GM12878 (cell line): ENCODE measurements at regions of chr3 and their contacts with region 1.

Region 1: DNA sequence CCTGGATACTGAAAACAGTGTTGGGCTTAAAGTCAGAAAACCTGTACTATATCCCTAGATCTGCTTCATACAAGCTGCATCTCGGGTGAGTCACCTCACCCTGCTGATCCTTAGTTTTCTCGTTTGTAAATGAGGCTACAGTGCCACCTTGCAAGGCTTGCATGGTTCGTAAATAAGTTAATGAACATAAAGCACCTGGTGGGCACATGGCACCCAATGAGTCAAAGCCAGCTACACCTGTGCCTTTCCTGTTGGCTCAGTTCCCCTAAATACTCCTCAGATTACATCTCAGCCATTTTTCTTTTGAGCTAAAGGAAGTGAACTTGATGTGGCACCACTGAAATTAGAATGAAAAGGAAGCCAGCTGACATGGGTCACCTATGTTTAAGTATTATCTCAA is 26.5 kb downstream of the RTP1 start:
- DNase-seq: no peak
- ATAC-seq: no peak
- H3K4me3 ChIP-seq: no peak overlapping the region
- H3K27ac ChIP-seq: no peak overlapping the region
- H3K4me1 ChIP-seq: no peaks in the 10 kb centered on the region
- H3K27me3 ChIP-seq: peaks cover 0 to 5% of the 10 kb centered on the region in 2 experiments; a peak in 3 of 4 replicates
- CTCF ChIP-seq: no peak
- EP300 ChIP-seq: no peak
- POLR2A ChIP-seq: no peak
- RAD21 ChIP-seq: no peak

Region 2: DNA sequence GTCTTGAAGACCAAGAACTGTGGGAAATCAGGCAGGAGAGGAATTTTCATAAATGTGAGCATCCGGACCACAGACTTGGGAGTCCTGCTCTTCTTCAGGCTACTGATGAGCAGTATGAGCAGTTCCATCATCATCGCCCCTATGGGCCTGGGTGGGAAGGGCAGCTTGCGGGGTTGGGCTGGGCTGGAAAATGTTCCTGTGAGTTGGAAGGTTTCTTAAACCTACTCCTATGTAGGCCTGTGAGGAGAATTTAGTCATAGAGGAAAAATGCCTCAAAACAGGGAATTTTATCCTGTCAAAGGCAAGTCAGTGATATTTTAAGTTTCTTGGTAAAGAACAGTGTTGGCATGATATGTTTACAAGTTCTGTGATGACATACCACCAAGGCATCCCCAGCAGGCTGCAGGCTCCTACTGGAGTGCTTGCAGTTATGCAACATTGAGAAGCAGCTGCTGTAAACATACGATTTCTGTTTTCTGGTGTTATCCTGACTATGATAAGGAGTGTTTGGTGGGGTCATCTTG is 57.5 kb after region 1 on chr3:
- CTCF ChIA-PET with region 1: no interaction called
- POLR2A ChIA-PET with region 1: no interaction called
- RAD21 ChIA-PET with region 1: no interaction called
- SMC1A ChIA-PET with region 1: no interaction called
- in situ Hi-C with region 1: no loop called
- intact Hi-C with region 1: no loop called
- DNase-seq: no peak
- ATAC-seq: no peak
- H3K4me3 ChIP-seq: no peak overlapping the region
- H3K27ac ChIP-seq: no peak overlapping the region
- H3K4me1 ChIP-seq: no peaks in the 10 kb centered on the region
- H3K27me3 ChIP-seq: peaks cover 0 to 4% of the 10 kb centered on the region in 2 experiments; a peak in 2 of 4 replicates
- CTCF ChIP-seq: no peak
- EP300 ChIP-seq: no peak
- POLR2A ChIP-seq: no peak
- RAD21 ChIP-seq: no peak

Region 3: DNA sequence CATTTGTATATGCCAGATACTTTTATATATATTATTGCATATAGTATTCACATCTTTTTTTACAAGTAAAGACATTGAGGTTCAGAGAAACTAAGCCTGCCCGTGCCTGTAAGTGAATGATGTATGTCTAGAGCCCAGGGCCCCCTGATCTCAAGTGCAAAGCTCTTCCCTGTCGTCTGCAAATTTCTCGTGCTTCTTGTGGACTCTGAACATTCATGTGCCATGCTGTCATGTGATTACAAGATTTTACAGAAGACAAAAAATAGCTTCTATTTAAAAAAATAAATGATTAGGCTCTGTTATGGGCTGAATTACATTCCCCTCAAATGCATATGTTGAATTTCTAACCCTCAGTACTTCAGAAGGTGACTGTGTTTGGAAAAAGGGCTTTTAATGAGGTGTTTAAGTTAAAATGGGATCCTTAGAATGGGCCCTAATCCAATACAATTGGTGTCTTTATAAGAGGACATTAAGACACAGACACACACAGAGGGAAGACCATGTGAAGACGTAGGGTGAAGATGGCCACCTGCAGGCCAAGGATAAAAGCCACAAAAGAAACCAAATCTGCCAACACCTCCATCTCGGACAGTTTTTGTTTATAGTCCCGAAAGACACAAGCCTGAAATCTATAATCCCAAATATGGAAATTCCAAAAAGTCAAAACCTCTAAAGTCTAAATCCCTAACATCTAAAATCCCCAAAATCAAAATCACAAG is 71.7 kb after region 1 on chr3:
- CTCF ChIA-PET with region 1: interaction called, 4 read pairs
- POLR2A ChIA-PET with region 1: no interaction called
- RAD21 ChIA-PET with region 1: no interaction called
- SMC1A ChIA-PET with region 1: interaction called, 3 read pairs
- in situ Hi-C with region 1: no loop called
- intact Hi-C with region 1: loop called (anchors 1 kb)
- DNase-seq: no peak
- ATAC-seq: no peak
- H3K4me3 ChIP-seq: no peak overlapping the region
- H3K27ac ChIP-seq: no peak overlapping the region
- H3K4me1 ChIP-seq: no peaks in the 10 kb centered on the region
- H3K27me3 ChIP-seq: peaks cover 0 to 2% of the 10 kb centered on the region in 2 experiments; a peak in 1 of 4 replicates
- CTCF ChIP-seq: no peak
- EP300 ChIP-seq: no peak
- POLR2A ChIP-seq: no peak
- RAD21 ChIP-seq: no peak

Region 4: DNA sequence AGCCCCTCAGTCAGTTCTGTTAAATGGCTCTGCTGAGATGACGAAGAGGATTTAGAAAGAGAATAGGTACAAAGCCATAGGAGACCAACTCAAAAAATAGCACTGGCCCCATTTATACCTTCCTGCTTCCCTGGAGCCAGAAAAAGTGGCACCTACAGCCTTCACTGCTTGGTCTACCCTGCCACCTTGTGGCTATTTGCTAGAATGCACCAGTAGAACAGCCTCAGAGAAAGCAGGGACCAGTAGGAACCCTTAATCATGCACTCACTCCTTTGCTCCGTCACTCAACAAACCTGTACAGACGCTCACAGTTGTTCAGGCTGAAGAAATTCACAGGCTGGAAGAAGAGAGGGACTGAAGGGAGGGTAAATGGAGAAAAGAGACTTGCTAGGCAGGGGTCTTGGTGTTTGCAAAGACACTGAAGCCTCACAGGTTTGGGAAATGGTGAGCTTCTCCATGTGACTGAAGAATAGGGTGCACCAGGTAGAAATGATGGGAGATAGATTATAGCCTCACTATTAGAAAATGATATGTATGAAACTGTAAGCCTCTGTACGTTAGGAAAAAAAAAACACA is 490.7 kb after region 1 on chr3:
- CTCF ChIA-PET with region 1: interaction called, 5 read pairs
- POLR2A ChIA-PET with region 1: no interaction called
- RAD21 ChIA-PET with region 1: interaction called, 3 read pairs
- SMC1A ChIA-PET with region 1: interaction called, 3 read pairs
- in situ Hi-C with region 1: no loop called
- intact Hi-C with region 1: loop called (anchors 2 kb)
- DNase-seq: no peak
- ATAC-seq: peak; percentile 96
- H3K4me3 ChIP-seq: no peak overlapping the region
- H3K27ac ChIP-seq: no peak overlapping the region
- H3K4me1 ChIP-seq: no peaks in the 10 kb centered on the region
- H3K27me3 ChIP-seq: no peaks in the 10 kb centered on the region
- CTCF ChIP-seq: peak; percentile 87 to 92 (median 90); a peak in 5 of 6 replicates
- EP300 ChIP-seq: no peak
- POLR2A ChIP-seq: no peak
- RAD21 ChIP-seq: peak; percentile 96